Activated naive CD4-positive, alpha-beta T cell treated with anti-CD3 and anti-CD28 coated beads for 36 hours (primary cell): ENCODE measurements at regions of chr12 and their contacts with region 1.

Region 1: GRCh38 chr12:66169221-66170170 is at the start of gene TMBIM4:
- DNase-seq: peak; percentile 93
- H3K4me3 Mint-ChIP-seq: peak within 1 kb of the TSS; percentile 98
- H3K27ac Mint-ChIP-seq: peak within 1 kb of the TSS; percentile 100
- H3K4me1 Mint-ChIP-seq: peaks cover 42% of the 10 kb centered on the region
- H3K27me3 Mint-ChIP-seq: no peaks in the 10 kb centered on the region
- total RNA-seq, gene TMBIM4: 51.2 to 51.3 TPM

Region 2: GRCh38 chr12:66130277-66131066 is 39.0 kb before region 1 on chr12 and contains the start of gene LLPH:
- CTCF ChIA-PET with region 1: interaction called, 3 read pairs
- intact Hi-C with region 1: loop called (anchors 1 kb)
- DNase-seq: peak; percentile 94
- H3K4me3 Mint-ChIP-seq: peak within 1 kb of the TSS; percentile 96
- H3K27ac Mint-ChIP-seq: peak within 1 kb of the TSS; percentile 95
- H3K4me1 Mint-ChIP-seq: peaks cover 53% of the 10 kb centered on the region
- H3K27me3 Mint-ChIP-seq: no peaks in the 10 kb centered on the region
- total RNA-seq, gene LLPH: 25.6 to 26.0 TPM

Region 3: GRCh38 chr12:66188584-66189485 is 19.3 kb after region 1 on chr12 and contains the start of gene IRAK3:
- CTCF ChIA-PET with region 1: interaction called, 5 read pairs
- intact Hi-C with region 1: loop called (anchors 2 kb)
- DNase-seq: peak; percentile 41
- H3K4me3 Mint-ChIP-seq: peak within 1 kb of the TSS; percentile 71
- H3K27ac Mint-ChIP-seq: no peak within 1 kb of the TSS
- H3K4me1 Mint-ChIP-seq: peaks cover 6% of the 10 kb centered on the region
- H3K27me3 Mint-ChIP-seq: peaks cover 48% of the 10 kb centered on the region
- total RNA-seq, gene IRAK3: 0.32 to 0.38 TPM

Region 4: DNA sequence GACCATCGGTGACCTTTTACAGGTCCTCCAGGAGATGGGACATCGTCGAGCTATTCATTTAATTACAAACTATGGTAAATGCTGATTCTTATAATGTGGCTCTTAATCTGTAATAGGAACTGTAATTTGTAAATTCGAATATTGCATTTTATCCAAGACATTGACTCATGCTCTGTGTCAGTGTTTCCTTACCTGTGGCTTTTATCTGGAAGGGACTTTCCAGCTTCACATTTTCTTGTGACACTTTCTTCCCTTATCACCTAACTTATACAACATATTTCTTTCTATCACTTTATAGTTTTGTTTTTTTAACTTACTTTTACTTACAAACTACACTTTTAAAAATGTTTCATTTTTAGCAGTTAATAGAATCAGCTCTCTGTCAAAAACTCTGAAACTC is 34.3 kb after region 1 on chr12:
- CTCF ChIA-PET with region 1: interaction called, 6 read pairs
- intact Hi-C with region 1: loop called (anchors 2 kb)
- DNase-seq: peak; percentile 29
- H3K4me3 Mint-ChIP-seq: no peak overlapping the region
- H3K27ac Mint-ChIP-seq: peak overlapping the region; percentile 1
- H3K4me1 Mint-ChIP-seq: peaks cover 18% of the 10 kb centered on the region
- H3K27me3 Mint-ChIP-seq: peaks cover 3% of the 10 kb centered on the region

Region 5: GRCh38 chr12:66288121-66288520 is 118.6 kb after region 1 on chr12:
- CTCF ChIA-PET with region 1: no interaction called
- intact Hi-C with region 1: loop called (anchors 1 kb)
- DNase-seq: peak; percentile 67
- H3K4me3 Mint-ChIP-seq: peak overlapping the region; percentile 40
- H3K27ac Mint-ChIP-seq: peak overlapping the region; percentile 74
- H3K4me1 Mint-ChIP-seq: peaks cover 77% of the 10 kb centered on the region
- H3K27me3 Mint-ChIP-seq: no peaks in the 10 kb centered on the region

Region 6: DNA sequence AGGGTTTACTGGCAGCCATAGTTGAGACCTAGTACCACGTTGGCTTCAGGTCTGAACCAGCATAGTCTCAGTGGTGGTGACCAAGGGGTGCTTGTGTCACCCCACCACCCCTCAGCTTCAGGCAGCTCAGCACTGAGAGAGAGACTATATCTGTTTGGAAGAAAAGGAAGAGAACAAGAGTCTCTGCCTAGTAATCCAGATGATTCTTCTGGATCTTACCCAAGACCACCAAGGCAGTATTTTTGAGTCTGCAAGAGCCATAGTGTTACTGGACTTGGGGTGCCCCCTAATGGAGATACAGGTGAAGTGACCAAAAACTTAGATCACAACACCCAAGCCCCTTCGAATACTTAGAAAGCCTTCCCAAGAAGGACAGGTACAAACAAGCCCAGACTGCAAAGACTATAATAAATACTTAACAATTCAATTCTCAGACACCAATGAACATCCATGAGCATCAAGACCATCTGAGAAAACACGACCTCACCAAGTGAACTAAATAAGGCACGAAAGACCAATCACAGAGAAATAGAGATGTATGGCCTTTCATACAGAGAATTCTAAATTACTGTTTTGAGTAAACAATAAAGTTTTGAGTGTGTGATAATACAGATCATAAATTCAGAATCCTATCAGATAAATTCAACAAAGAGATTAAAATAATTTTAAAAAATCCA is 239.8 kb after region 1 on chr12:
- CTCF ChIA-PET with region 1: no interaction called
- intact Hi-C with region 1: no loop called
- DNase-seq: peak; percentile 59
- H3K4me3 Mint-ChIP-seq: no peak overlapping the region
- H3K27ac Mint-ChIP-seq: no peak overlapping the region
- H3K4me1 Mint-ChIP-seq: no peaks in the 10 kb centered on the region
- H3K27me3 Mint-ChIP-seq: peaks cover 4% of the 10 kb centered on the region